ENCODE measurements at regions of chr19 and their contacts with region 1.

Region 1: DNA sequence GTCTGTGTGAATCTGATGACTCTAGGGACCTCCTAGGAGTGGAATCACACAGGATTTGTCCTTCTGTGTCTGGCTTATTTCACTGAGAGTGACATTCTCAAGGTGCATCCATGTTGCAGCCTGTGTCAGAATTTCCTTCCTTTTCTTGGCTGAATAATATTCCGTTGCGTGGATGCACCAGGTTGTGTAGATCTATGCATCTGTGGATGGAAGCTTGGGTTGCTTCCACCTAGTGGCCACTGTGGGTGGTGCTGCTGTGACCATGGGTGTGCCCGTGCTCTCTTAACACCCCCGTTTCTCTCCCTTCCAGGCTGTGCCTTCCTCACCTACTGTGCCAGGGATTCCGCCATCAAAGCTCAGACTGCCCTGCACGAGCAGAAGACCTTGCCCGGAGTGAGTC is 26.2 kb downstream of the CELF5 start:
- DNase-seq: peak in 1 of 2 experiments; percentile 5
- H3K4me3 ChIP-seq: no peak overlapping the region
- H3K27ac ChIP-seq: no peak overlapping the region
- H3K4me1 ChIP-seq: no peaks in the 10 kb centered on the region
- H3K27me3 ChIP-seq: peaks cover 6% of the 10 kb centered on the region; the same call in 1 of the 2 replicates
- CTCF ChIP-seq: peak; percentile 61

Region 2: DNA sequence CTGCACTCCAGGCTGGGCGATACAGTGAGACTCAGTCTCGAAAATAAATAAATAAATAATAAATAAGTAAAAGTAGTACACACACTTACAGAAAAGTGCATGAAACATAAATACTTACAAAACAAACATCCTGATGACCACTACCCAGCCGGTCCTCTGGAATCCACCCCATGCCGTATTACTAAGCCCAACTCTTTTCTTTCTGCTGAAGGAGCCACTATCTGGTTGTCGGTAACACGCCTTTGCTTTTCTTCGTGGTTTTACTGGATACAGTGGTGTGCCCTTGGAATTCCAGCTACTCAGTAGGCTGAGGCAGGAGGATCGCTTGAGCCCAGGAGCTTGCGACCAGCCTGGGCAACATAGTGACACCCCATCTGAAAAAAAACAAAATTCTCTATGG is 13.2 kb after region 1 on chr19:
- CTCF ChIA-PET with region 1: interaction called, 11 read pairs
- POLR2A ChIA-PET with region 1: no interaction called
- intact Hi-C with region 1: no loop called
- DNase-seq: no peak
- H3K4me3 ChIP-seq: no peak overlapping the region
- H3K27ac ChIP-seq: no peak overlapping the region
- H3K4me1 ChIP-seq: no peaks in the 10 kb centered on the region
- H3K27me3 ChIP-seq: 0 out of 2 replicates have a peak, but pooled peaks cover 13% of the 10 kb centered on the region
- CTCF ChIP-seq: no peak